ENCODE measurements at regions of chr16 and their contacts with region 1.

Region 1: GRCh38 chr16:23428351-23428750 is 24.6 kb downstream of the COG7 start:
- DNase-seq: no peak
- ATAC-seq: no peak
- H3K4me3 ChIP-seq: no peak overlapping the region
- H3K27ac ChIP-seq: no peak overlapping the region
- H3K4me1 ChIP-seq: peaks cover 4 to 9% of the 10 kb centered on the region in 2 donors
- H3K27me3 ChIP-seq: no peaks in the 10 kb centered on the region
- CTCF ChIP-seq: no peak
- POLR2A ChIP-seq: no peak

Region 2: DNA sequence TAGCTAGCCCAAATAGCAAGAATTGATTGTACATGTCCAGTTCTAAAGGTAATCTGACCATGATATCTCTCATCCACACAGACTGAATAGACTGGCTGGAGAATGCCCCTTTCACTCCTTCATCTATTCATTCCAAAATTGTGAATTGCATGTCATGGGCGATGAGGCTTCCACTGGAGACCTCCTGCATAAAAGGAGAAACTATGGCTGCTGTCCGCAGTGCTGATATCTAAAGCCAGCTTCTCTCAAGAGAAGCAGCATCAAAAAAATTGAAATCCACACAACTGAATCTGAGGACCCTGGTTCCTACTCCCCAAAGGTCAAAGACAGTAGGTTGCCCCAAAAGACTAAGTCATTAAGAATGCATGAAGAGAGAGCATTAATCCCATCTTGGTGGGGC is 253.7 kb before region 1 on chr16:
- in situ Hi-C with region 1: loop called in 1 of 4 experiments (anchors 5 kb)
- intact Hi-C with region 1: no loop called
- DNase-seq: no peak
- ATAC-seq: no peak
- H3K4me3 ChIP-seq: no peak overlapping the region
- H3K27ac ChIP-seq: no peak overlapping the region
- H3K4me1 ChIP-seq: no peaks in the 10 kb centered on the region
- H3K27me3 ChIP-seq: peaks cover 0 to 3% (median 0%) of the 10 kb centered on the region in 3 donors
- CTCF ChIP-seq: no peak
- POLR2A ChIP-seq: no peak

Region 3: DNA sequence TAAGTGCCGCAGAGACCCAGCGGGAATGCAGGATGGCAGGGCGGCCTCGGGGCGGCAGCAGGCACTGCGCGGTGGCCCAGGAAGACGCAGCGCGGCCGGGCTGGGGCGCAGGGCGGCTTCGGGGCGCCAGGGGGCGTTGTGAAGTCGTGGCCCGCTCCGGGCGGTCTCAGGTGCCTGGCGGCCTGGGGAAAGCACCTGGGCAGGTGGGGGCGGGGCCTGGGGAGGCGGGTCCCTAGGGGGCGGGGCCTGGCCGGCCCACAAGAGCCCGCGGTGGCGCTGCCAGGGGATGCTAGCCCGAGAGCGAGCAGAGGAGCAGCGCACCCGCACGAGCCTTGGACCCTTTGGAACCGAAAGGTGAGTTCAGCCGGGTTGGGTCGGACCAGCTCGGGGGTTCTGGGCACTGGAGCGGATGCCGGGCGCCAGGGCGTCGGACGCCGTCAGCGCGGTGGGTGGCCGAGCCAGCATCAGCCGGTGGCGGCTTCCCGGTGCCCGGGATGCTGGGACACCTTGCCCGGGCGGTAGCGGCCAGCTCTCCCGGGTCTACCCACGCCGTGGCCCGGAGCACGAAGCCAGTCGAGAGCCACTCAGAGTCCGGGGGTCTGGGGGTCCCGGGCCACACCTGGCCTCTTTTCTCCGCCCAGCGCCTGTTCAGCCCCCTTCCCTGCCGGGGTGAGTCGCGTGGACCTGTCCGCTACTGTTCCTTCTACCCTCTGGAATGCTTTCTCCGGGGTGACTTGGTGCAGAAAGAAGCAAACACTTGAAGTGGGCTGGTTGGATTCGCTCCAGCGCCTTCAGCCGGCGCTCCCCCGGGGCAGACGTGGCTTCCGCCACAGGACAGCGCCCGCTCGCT is 245.7 kb before region 1 on chr16 and contains the start of gene SCNN1G:
- in situ Hi-C with region 1: loop called in 2 of 4 experiments (anchors 5 kb)
- intact Hi-C with region 1: no loop called
- DNase-seq: peak; percentile 14 to 51
- ATAC-seq: peak; percentile 82 to 89
- H3K4me3 ChIP-seq: peak within 1 kb of the TSS; percentile 19 to 59 (median 50)
- H3K27ac ChIP-seq: no peak within 1 kb of the TSS
- H3K4me1 ChIP-seq: peaks cover 7 to 16% of the 10 kb centered on the region in 2 donors
- H3K27me3 ChIP-seq: peaks cover 18 to 33% (median 30%) of the 10 kb centered on the region in 3 donors
- CTCF ChIP-seq: peak; percentile 80 to 99 (median 91)
- POLR2A ChIP-seq: no peak
- total RNA-seq, gene SCNN1G: 0.58 TPM in 1 of 4 donors, not detected in the others